ENCODE measurements at regions of chr9 and their contacts with region 1.

Region 1: GRCh38 chr9:23764219-23764618 is 61.8 kb downstream of the ELAVL2 start:
- DNase-seq: no peak
- ATAC-seq: no peak
- H3K4me3 ChIP-seq: no peak overlapping the region
- H3K27ac ChIP-seq: no peak overlapping the region
- H3K4me1 ChIP-seq: peaks cover 0 to 8% (median 0%) of the 10 kb centered on the region in 9 donors
- H3K27me3 ChIP-seq: no peaks in the 10 kb centered on the region
- CTCF ChIP-seq: no peak

Region 2: DNA sequence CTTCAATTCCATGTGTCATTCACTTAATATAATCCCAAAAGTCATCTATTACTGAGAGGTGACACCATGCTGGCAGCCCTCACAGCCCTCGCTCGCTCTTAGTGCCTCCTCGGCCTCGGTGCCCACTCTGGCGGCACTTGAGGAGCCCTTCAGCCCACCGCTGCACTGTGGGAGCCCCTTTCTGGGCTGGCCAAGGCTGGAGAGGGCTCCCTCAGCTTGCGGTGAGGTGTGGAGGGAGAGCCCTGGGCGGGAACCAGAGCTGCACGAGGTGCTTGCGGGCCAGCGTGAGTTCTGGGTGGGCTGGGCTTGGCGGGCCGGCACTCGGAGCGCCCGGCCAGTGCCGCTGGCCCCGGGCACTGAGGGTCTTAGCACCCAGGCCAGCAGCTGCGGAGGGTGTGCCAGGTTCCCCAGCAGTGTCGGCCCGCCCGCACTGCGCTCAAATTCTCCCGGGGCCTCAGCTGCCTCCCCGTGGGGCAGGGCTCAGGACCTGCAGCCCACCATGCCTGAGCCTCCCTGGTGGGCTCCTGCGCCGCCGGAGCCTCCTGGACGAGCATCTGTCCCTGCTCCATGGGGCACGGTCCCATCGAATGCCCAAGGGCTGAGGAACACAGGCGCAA is 312.3 kb before region 1 on chr9:
- intact Hi-C with region 1: loop called in 1 of 10 experiments (anchors 5 kb)
- DNase-seq: no peak
- ATAC-seq: no peak
- H3K4me3 ChIP-seq: no peak overlapping the region
- H3K27ac ChIP-seq: no peak overlapping the region
- H3K4me1 ChIP-seq: no peaks in the 10 kb centered on the region
- H3K27me3 ChIP-seq: no peaks in the 10 kb centered on the region
- CTCF ChIP-seq: no peak